Heart right ventricle (tissue), 16 donors: ENCODE measurements at regions of chr3 and their contacts with region 1.

Region 1: DNA sequence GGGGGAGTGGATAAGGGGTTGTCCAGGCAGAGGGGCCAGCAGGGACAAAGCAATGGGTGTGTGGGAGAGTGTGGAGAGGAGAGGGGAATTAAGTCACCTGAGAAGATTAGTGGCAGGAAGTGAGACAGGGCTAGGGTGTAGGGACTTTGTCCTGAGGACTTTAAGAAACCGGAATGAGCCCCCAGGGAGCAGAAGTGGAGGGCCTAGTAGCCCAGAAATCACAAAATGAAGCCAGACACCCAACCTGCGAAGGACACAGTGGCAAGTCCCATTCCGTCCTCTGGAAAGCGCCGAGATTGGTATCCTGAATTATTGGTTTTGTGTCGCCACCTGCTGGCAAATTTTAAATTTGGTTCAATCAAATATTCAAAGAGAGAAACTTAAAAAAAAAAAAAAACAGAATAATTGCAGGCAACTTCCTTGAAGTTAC is 78.0 kb upstream of the SLC25A36 start:
- DNase-seq: peak in 1 of 2 donors; percentile 58
- ATAC-seq: peak in 7 of 8 donors; percentile 16 to 56 (median 37)
- H3K4me3 ChIP-seq: no peak overlapping the region
- H3K27ac ChIP-seq: no peak overlapping the region
- H3K4me1 ChIP-seq: no peaks in the 10 kb centered on the region
- H3K27me3 ChIP-seq: no peaks in the 10 kb centered on the region
- CTCF ChIP-seq: peak in 8 of 9 donors; percentile 20 to 66 (median 56)

Region 2: DNA sequence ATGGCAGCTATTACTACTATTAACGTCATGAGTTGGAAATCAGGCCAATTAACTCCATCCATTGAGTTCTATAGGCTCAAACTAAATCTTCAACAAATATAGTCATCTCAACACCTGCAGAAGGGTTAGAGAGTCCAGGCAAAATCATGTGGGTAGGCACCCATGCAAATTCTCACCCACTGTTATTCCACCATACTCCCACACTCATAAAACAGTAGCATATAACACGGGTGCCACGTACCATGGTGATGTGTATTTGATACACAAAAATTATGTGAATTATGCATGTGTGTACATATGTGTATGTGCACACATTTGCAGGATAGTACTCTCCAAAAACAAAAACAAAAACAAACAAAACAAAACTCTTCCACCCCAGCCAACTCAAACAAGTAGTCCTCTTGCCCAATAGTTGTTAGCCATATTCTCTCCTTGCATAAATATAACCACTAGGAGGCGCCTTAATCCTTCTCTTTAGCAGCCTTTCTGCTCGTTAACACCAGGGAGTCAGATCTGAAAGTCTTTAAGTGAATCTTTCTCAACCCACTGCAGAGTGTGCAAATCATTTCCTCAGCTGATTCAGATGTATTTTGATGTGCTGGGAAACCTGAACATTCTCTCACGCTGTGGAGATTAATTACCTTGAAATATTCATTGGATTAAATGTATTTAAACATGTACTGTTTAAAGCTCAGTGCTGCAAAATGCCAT is 1436.2 kb before region 1 on chr3:
- intact Hi-C with region 1: loop called in 3 of 10 experiments (anchors 10 kb)
- DNase-seq: peak in 1 of 2 donors; percentile 40
- ATAC-seq: peak in 7 of 8 donors; percentile 73 to 93 (median 83)
- H3K4me3 ChIP-seq: no peak overlapping the region
- H3K27ac ChIP-seq: no peak overlapping the region
- H3K4me1 ChIP-seq: peaks cover 0 to 6% (median 0%) of the 10 kb centered on the region in 9 donors
- H3K27me3 ChIP-seq: no peaks in the 10 kb centered on the region
- CTCF ChIP-seq: peak; percentile 77 to 89 (median 84)

Region 3: GRCh38 chr3:139718415-139718814 is 1145.2 kb before region 1 on chr3:
- intact Hi-C with region 1: loop called in 1 of 10 experiments (anchors 5 kb)
- DNase-seq: peak; percentile 18 to 45
- ATAC-seq: peak in 6 of 8 donors; percentile 67 to 74 (median 71)
- H3K4me3 ChIP-seq: no peak overlapping the region
- H3K27ac ChIP-seq: no peak overlapping the region
- H3K4me1 ChIP-seq: peaks cover 0 to 10% (median 0%) of the 10 kb centered on the region in 9 donors
- H3K27me3 ChIP-seq: peaks cover 0 to 5% (median 0%) of the 10 kb centered on the region in 7 donors
- CTCF ChIP-seq: peak; percentile 23 to 67 (median 51)

Region 4: GRCh38 chr3:139940622-139941021 is 923.0 kb before region 1 on chr3:
- intact Hi-C with region 1: loop called in 1 of 10 experiments (anchors 5 kb)
- DNase-seq: peak in 1 of 2 donors; percentile 17
- ATAC-seq: peak in 6 of 8 donors; percentile 63 to 89 (median 76)
- H3K4me3 ChIP-seq: no peak overlapping the region
- H3K27ac ChIP-seq: peak overlapping the region in 1 of 10 donors; percentile 26
- H3K4me1 ChIP-seq: peaks cover 0 to 40% (median 12%) of the 10 kb centered on the region in 9 donors
- H3K27me3 ChIP-seq: peaks cover 0 to 30% (median 9%) of the 10 kb centered on the region in 7 donors
- CTCF ChIP-seq: no peak

Region 5: GRCh38 chr3:140552898-140553297 is 310.7 kb before region 1 on chr3:
- intact Hi-C with region 1: loop called in 1 of 10 experiments (anchors 10 kb)
- DNase-seq: peak in 1 of 2 donors; percentile 21
- ATAC-seq: peak in 5 of 8 donors; percentile 38 to 89 (median 61)
- H3K4me3 ChIP-seq: no peak overlapping the region
- H3K27ac ChIP-seq: no peak overlapping the region
- H3K4me1 ChIP-seq: no peaks in the 10 kb centered on the region
- H3K27me3 ChIP-seq: no peaks in the 10 kb centered on the region
- CTCF ChIP-seq: peak in 5 of 9 donors; percentile 25 to 47 (median 31)

Region 6: DNA sequence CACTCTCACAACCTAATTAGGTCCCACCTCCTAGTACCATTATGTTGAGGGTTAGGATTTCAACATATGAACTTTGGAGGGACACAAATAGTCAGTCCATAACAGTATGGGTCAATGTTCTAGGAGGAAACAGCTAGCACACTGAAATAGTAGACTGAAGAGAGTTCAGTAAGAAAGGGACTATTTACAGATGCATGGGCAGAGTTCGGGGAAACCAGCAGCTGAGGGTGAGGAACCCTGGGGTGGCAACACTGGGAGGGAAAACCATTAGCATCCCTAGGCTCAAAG is 290.0 kb after region 1 on chr3:
- intact Hi-C with region 1: no loop called
- DNase-seq: no peak
- ATAC-seq: no peak
- H3K4me3 ChIP-seq: no peak overlapping the region
- H3K27ac ChIP-seq: no peak overlapping the region
- H3K4me1 ChIP-seq: peaks cover 0 to 10% (median 0%) of the 10 kb centered on the region in 9 donors
- H3K27me3 ChIP-seq: no peaks in the 10 kb centered on the region
- CTCF ChIP-seq: no peak